H1 (cell line): ENCODE measurements at regions of chr11 and their contacts with region 1.

Region 1: GRCh38 chr11:103035791-103036434 is 56.0 kb downstream of the DCUN1D5 start:
- DNase-seq: no peak
- H3K4me3 ChIP-seq: no peak overlapping the region
- H3K27ac ChIP-seq: no peak overlapping the region
- H3K4me1 ChIP-seq: no peaks in the 10 kb centered on the region; a peak in 1 of 7 replicates
- H3K27me3 ChIP-seq: no peaks in the 10 kb centered on the region
- CTCF ChIP-seq: peak in 2 of 3 experiments; percentile 18 to 70; a peak in 2 of 4 replicates
- EP300 ChIP-seq: no peak
- POLR2A ChIP-seq: no peak
- RAD21 ChIP-seq: peak; percentile 44 to 46

Region 2: GRCh38 chr11:103013421-103013820 is 22.5 kb before region 1 on chr11:
- CTCF ChIA-PET with region 1: interaction called, 10 read pairs
- POLR2A ChIA-PET with region 1: no interaction called
- DNase-seq: no peak
- H3K4me3 ChIP-seq: no peak overlapping the region
- H3K27ac ChIP-seq: no peak overlapping the region
- H3K4me1 ChIP-seq: no peaks in the 10 kb centered on the region
- H3K27me3 ChIP-seq: no peaks in the 10 kb centered on the region
- CTCF ChIP-seq: no peak
- EP300 ChIP-seq: no peak
- POLR2A ChIP-seq: no peak
- RAD21 ChIP-seq: no peak

Region 3: GRCh38 chr11:103051981-103052380 is 16.1 kb after region 1 on chr11:
- CTCF ChIA-PET with region 1: interaction called, 12 read pairs
- POLR2A ChIA-PET with region 1: interaction called, 3 read pairs
- DNase-seq: no peak
- H3K4me3 ChIP-seq: no peak overlapping the region
- H3K27ac ChIP-seq: no peak overlapping the region
- H3K4me1 ChIP-seq: no peaks in the 10 kb centered on the region
- H3K27me3 ChIP-seq: no peaks in the 10 kb centered on the region
- CTCF ChIP-seq: no peak
- EP300 ChIP-seq: no peak
- POLR2A ChIP-seq: no peak
- RAD21 ChIP-seq: no peak